ENCODE measurements at regions of chr17 and their contacts with region 1.

Region 1: DNA sequence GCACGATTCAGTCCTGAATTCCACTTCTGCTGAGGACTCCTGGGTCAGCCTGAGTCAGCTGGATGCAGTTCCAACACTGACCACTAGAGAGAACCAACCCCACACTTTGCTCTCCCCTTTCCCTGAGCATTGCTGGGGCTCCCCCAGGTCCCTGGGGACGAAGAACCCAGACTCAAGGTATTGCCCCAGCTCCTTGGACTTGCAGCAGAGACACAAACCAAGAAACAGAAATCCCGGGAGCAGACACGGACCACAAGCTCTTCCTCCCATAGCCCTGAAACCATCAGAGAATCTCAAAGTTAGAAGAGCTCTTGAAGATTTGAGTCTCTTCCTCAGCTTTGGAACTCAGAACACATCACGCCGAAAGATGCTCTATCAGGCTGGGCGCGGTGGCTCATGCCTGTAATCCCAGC is 678 bp upstream of the GH1 start:
- DNase-seq: no peak
- H3K4me3 ChIP-seq: no peak overlapping the region
- H3K27ac ChIP-seq: no peak overlapping the region
- H3K4me1 ChIP-seq: peaks cover 6% of the 10 kb centered on the region
- H3K27me3 ChIP-seq: peaks cover 18% of the 10 kb centered on the region
- CTCF ChIP-seq: peak; percentile 94

Region 2: DNA sequence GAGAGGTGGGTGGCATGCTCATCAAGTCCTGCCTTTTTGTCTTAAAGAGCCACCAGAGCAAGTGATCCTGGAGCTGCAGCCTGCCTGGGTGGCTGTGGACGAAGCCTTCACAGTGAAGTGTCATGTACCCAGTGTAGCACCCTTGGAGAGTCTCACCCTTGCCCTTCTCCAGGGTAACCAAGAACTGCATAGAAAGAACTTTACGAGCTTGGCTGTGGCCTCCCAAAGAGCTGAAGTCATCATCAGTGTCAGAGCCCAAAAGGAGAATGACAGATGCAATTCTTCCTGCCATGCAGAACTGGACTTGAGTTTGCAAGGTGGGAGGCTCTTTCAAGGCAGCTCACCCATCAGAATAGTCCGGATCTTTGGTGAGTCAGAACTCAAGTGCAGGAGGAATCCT is 60.1 kb before region 1 on chr17:
- intact Hi-C with region 1: no loop called
- DNase-seq: no peak
- H3K4me3 ChIP-seq: no peak overlapping the region
- H3K27ac ChIP-seq: no peak overlapping the region
- H3K4me1 ChIP-seq: no peaks in the 10 kb centered on the region
- H3K27me3 ChIP-seq: no peaks in the 10 kb centered on the region
- CTCF ChIP-seq: no peak

Region 3: GRCh38 chr17:63974594-63975192 is 55.4 kb after region 1 on chr17:
- intact Hi-C with region 1: no loop called
- DNase-seq: no peak
- H3K4me3 ChIP-seq: no peak overlapping the region
- H3K27ac ChIP-seq: no peak overlapping the region
- H3K4me1 ChIP-seq: peaks cover 49% of the 10 kb centered on the region
- H3K27me3 ChIP-seq: no peaks in the 10 kb centered on the region
- CTCF ChIP-seq: no peak

Region 4: DNA sequence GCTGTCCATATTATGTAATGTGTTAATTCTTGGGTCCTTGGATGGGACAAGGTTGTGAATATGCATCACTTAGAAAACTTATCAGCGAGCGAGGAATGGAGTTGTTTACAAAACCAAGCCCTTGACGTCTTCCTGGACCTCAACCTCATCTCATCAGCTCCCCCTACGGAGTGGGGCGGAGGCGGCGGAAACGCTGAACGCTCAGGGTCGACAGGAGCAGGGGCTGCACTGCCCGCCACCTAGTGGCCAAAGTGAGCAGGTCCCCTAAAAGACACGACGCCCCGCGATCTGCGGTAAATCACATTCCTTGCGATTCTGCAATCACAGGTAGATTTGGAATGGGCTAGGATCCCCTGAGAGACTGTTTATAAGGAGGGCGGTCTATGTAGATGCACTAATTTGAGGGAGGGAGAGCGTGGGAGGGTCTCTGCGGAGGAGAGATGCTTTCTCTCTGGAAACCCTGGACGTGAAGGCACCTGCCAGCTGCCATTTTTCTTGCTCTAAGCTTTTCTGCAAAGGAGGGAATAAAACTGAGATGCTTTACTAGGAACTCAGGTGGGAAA is 106.5 kb after region 1 on chr17:
- intact Hi-C with region 1: loop called (anchors 10 kb)
- DNase-seq: peak; percentile 73
- H3K4me3 ChIP-seq: peak overlapping the region; percentile 41
- H3K27ac ChIP-seq: peak overlapping the region; percentile 37
- H3K4me1 ChIP-seq: peaks cover 22% of the 10 kb centered on the region
- H3K27me3 ChIP-seq: no peaks in the 10 kb centered on the region
- CTCF ChIP-seq: peak; percentile 96